RWPE1 (cell line): ENCODE measurements at regions of chr10 and their contacts with region 1.

Region 1: GRCh38 chr10:122051251-122051996 is 62.5 kb downstream of the TACC2 start:
- DNase-seq: peak; percentile 70
- H3K27ac ChIP-seq: peak overlapping the region; percentile 56; the same call in 1 of the 2 replicates
- CTCF ChIP-seq: peak; percentile 56

Region 2: GRCh38 chr10:121655254-121656144 is 395.9 kb before region 1 on chr10:
- CTCF ChIA-PET with region 1: no interaction called
- POLR2A ChIA-PET with region 1: no interaction called
- DNase-seq: no peak
- H3K27ac ChIP-seq: peak overlapping the region; percentile 65
- CTCF ChIP-seq: no peak

Region 3: DNA sequence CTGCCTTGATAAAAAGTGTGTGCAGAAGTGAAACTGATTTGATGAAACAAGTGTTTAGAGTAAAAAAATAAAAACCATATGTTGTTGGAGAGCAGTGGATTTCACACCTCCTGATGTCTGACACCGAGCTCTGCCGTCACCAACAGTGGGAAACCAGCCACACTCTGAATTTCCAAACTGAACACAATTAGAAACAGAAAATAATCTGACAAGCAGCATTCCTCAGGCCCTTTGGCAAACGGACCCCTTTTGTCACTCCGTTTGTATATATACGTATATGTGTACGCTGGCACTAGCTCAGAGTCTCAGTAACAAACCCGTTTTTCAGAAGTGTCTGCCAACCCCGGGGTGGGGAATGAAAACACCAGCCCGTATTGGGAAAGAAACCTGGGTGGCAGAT is 30.0 kb before region 1 on chr10:
- CTCF ChIA-PET with region 1: no interaction called
- POLR2A ChIA-PET with region 1: no interaction called
- DNase-seq: no peak
- H3K27ac ChIP-seq: no peak overlapping the region
- CTCF ChIP-seq: no peak

Region 4: GRCh38 chr10:122085423-122085911 is 34.0 kb after region 1 on chr10:
- CTCF ChIA-PET with region 1: interaction called, 10 read pairs
- POLR2A ChIA-PET with region 1: no interaction called
- DNase-seq: peak; percentile 95
- H3K27ac ChIP-seq: peak overlapping the region; percentile 99
- CTCF ChIP-seq: no peak

Region 5: GRCh38 chr10:122112625-122113160 is 61.3 kb after region 1 on chr10:
- CTCF ChIA-PET with region 1: interaction called, 11 read pairs
- POLR2A ChIA-PET with region 1: no interaction called
- DNase-seq: peak; percentile 93
- H3K27ac ChIP-seq: peak overlapping the region; percentile 95
- CTCF ChIP-seq: peak; percentile 64

Region 6: DNA sequence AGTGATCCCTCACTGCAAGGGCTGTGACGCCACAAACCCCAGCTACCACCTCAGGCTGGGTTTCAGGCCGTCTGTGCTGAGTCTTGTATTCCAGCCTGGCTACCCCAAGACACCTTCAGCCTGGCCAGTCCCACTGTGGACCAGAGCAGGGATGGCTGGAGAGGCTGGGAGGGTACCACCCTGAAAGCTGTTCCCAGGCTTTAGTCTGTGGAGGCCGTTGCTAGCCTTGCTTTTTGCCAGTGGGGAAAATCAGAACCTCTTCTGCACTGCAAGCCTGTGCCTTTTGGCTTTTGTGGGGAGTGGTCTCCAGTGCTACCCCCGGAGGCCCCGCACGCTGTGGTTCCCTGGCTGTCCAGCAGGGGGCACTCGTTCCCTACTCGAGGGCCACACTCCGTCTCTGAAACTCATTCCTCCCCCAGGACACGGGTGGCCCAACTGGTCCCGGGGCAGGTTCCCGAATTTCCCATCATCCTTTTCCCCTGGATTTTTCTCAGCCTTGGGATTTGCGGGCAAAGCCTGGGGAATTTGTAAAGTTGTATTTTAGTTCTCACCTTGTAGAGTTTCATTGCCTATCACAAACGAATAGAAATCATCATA is 91.3 kb after region 1 on chr10:
- CTCF ChIA-PET with region 1: interaction called, 10 read pairs
- POLR2A ChIA-PET with region 1: no interaction called
- DNase-seq: no peak
- H3K27ac ChIP-seq: peak overlapping the region; percentile 98
- CTCF ChIP-seq: peak; percentile 66

Region 7: GRCh38 chr10:122157451-122157850 is 106.0 kb after region 1 on chr10:
- CTCF ChIA-PET with region 1: interaction called, 15 read pairs
- POLR2A ChIA-PET with region 1: no interaction called
- DNase-seq: no peak
- H3K27ac ChIP-seq: no peak overlapping the region
- CTCF ChIP-seq: no peak